ENCODE measurements at regions of chr7 and their contacts with region 1.

Region 1: DNA sequence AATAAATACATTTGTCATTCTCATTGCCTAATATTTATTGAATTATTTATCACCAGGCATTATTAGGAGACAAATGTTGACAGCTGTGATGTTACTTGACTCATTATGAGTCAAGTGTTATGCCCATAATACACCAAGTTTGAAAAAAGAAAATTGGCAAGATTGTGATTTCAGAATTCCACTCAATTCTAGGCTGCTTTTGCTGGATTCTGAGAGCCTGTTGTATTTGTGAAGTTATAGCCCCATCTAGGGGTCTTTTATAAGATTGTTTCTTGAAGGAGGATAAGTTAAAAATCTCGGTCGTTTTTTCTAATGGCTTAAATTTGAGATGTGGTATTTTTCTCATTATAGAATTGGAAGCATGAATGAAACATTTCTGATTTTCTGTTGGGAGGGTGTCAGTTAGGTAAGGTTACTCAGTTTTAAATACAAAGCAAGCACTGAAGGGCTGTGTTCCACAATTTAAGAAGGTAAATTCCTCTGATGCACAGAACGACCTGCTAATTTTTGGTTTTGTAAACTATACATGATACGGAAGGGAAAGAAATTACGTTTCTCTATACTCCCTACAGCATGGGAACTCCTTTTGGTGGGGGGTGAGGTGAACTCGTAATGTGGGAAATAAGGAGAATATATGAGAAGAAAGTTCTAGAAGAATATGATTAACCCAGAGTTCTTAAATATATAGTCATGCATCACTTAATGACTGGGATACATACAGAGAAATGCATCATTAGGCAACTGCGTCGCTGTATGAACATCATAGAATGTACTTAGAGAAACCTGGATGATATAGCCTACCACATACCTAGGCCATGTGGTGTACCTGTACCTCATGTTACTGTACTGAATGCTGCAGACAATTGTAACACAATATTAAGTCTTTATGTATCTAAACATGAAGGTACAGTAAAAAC is 2.6 kb downstream of the STK31 start:
- DNase-seq: no peak
- ATAC-seq: no peak

Region 2: GRCh38 chr7:23570592-23571200 is 141.9 kb before region 1 on chr7:
- intact Hi-C with region 1: loop called in 1 of 2 experiments (anchors 5 kb)
- DNase-seq: peak; percentile 58 to 80
- ATAC-seq: peak; percentile 98

Region 3: DNA sequence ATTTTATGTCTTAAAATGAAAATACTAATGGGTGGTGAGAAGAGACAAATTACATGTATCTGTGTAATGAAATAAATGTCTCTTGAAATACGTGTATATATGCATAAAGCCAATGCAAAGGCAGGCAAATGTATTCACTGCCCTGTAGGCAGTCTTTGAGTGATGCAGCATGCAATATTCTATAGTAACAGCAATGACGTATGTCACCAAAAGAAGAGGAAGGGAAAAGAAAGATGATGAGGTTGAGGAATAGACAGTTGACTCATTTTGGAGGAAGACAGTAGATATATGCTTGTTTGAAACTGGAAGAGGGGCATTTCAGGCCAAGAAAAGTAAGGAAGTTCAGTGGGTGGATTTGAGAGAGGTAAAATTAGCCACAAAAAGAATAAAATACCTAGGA is 125.0 kb after region 1 on chr7:
- intact Hi-C with region 1: no loop called
- DNase-seq: no peak
- ATAC-seq: no peak